ENCODE measurements at regions of chr22 and their contacts with region 1.

Region 1: GRCh38 chr22:28882878-28883656 is at the start of gene ZNRF3:
- DNase-seq: peak; percentile 90 to 94
- H3K4me3 ChIP-seq: peak within 1 kb of the TSS; percentile 59 to 70
- H3K27ac ChIP-seq: peak within 1 kb of the TSS; percentile 71 to 84
- H3K4me1 ChIP-seq: no peaks in the 10 kb centered on the region
- H3K27me3 ChIP-seq: no peaks in the 10 kb centered on the region
- CTCF ChIP-seq: peak in 1 of 4 experiments; percentile 17
- POLR2A ChIP-seq: peak; percentile 65 to 72
- total RNA-seq, gene ZNRF3: 6.1 to 23.2 (median 12.0) TPM

Region 2: GRCh38 chr22:29031227-29032011 is 148.4 kb after region 1 on chr22:
- intact Hi-C with region 1: loop called (anchors 10 kb)
- DNase-seq: peak; percentile 65 to 85
- H3K4me3 ChIP-seq: peak overlapping the region; percentile 32 to 40
- H3K27ac ChIP-seq: peak overlapping the region; percentile 93 to 96
- H3K4me1 ChIP-seq: peaks cover 8 to 9% of the 10 kb centered on the region in 2 donors
- H3K27me3 ChIP-seq: no peaks in the 10 kb centered on the region
- CTCF ChIP-seq: peak in 2 of 4 experiments; percentile 3 to 20
- POLR2A ChIP-seq: peak; percentile 13 to 22

Measured in uterus (tissue), 4 donors.